ENCODE measurements at regions of chr6 and their contacts with region 1.

Region 1: DNA sequence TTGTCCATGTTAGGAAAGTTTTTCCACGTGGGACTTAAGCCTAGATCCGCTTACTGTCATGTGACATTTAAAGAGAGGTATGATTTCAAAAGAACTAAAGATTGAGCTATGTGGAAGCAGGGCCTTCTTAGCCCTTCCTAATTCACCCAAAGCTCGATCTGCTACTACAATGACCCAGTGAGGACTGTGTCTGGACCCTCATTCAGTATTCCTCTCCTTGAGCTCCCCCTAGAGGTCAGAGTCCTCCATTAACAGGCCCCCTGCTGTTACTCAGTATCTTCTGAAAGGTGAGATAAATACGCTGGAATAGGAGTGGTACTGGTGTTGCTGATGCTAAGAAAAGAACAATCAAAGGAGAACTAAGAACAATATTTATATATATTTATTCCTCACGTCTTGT is 414.0 kb downstream of the GJA1 start:
- DNase-seq: peak; percentile 84
- H3K4me3 ChIP-seq: no peak overlapping the region
- H3K27ac ChIP-seq: no peak overlapping the region
- H3K4me1 ChIP-seq: peaks cover 18% of the 10 kb centered on the region
- H3K27me3 ChIP-seq: no peaks in the 10 kb centered on the region
- CTCF ChIP-seq: peak; percentile 77

Region 2: DNA sequence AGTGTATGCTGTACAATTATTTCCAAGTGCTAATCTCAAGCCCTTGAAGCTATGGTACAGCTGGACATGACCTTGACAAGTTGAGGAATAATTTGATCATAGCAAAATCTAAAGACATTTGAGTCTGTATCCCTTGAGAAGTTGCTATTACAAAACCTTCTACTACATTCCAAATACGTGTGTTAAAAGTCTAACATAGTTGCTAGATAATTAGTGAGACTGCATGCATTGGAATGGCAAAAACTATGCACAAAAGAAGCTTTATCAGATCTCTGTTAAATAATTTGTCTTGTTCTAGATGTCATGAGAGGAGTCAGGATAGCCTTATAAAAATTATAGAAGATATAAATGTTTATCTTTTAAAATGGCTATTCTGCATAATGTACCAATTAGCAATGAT is 286.2 kb before region 1 on chr6:
- CTCF ChIA-PET with region 1: no interaction called
- POLR2A ChIA-PET with region 1: no interaction called
- intact Hi-C with region 1: loop called (anchors 5 kb)
- DNase-seq: no peak
- H3K4me3 ChIP-seq: no peak overlapping the region
- H3K27ac ChIP-seq: no peak overlapping the region
- H3K4me1 ChIP-seq: peaks cover 16% of the 10 kb centered on the region
- H3K27me3 ChIP-seq: no peaks in the 10 kb centered on the region
- CTCF ChIP-seq: no peak

Region 3: GRCh38 chr6:122033539-122034181 is 184.2 kb after region 1 on chr6:
- CTCF ChIA-PET with region 1: no interaction called
- POLR2A ChIA-PET with region 1: no interaction called
- intact Hi-C with region 1: loop called (anchors 2 kb)
- DNase-seq: peak; percentile 80
- H3K4me3 ChIP-seq: no peak overlapping the region
- H3K27ac ChIP-seq: no peak overlapping the region
- H3K4me1 ChIP-seq: no peaks in the 10 kb centered on the region
- H3K27me3 ChIP-seq: no peaks in the 10 kb centered on the region
- CTCF ChIP-seq: peak; percentile 72

Region 4: GRCh38 chr6:122289762-122290539 is 440.5 kb after region 1 on chr6:
- CTCF ChIA-PET with region 1: no interaction called
- POLR2A ChIA-PET with region 1: no interaction called
- intact Hi-C with region 1: loop called (anchors 10 kb)
- DNase-seq: peak; percentile 51
- H3K4me3 ChIP-seq: no peak overlapping the region
- H3K27ac ChIP-seq: no peak overlapping the region
- H3K4me1 ChIP-seq: peaks cover 24% of the 10 kb centered on the region
- H3K27me3 ChIP-seq: no peaks in the 10 kb centered on the region
- CTCF ChIP-seq: peak; percentile 56

Region 5: DNA sequence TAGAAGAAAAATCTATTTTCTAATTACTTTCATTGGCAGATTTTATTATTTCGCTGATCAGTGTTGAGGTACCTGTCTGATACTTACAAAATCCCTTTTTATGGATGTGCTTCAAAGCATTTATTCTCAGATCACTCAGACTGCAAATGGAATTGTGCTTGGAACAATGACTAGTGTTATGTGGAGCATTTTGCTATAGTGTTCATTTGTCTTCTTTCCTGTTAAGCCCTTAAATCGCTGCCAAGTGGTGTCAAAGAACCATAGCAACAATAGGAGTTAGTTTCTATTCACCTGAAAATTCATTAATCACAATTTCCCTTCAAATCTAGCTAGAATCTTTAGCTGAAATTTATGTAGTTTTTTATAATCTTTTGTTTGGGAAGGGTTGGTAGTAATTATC is 969.4 kb after region 1 on chr6:
- CTCF ChIA-PET with region 1: no interaction called
- POLR2A ChIA-PET with region 1: no interaction called
- intact Hi-C with region 1: no loop called
- DNase-seq: no peak
- H3K4me3 ChIP-seq: no peak overlapping the region
- H3K27ac ChIP-seq: no peak overlapping the region
- H3K4me1 ChIP-seq: no peaks in the 10 kb centered on the region
- H3K27me3 ChIP-seq: no peaks in the 10 kb centered on the region
- CTCF ChIP-seq: no peak

Measured in A673 (cell line).